Activated CD8-positive, alpha-beta T cell treated with anti-CD3 and anti-CD28 coated beads for 36 hours (primary cell): ENCODE measurements at regions of chr1 and their contacts with region 1.

Region 1: DNA sequence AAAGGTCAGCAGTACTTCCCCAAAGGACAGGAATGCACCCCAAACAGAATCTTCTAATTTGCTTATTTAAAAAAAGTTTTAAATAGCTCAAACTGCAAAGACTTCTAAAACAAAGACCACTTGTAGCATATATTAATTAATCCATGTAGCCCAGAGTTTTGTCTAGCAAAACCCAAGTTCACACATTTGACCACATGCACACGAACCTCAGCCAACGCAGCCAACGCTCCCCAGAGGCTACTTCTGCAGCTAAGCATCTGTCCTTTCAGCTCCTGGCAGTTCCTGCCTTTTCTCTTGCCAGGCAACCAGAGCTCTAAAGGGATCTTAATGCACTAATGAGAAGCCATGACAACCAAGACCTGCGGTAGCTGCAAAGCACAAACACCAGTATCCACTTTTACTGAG is 89.6 kb downstream of the RERE start:
- DNase-seq: no peak
- ATAC-seq: no peak
- H3K4me3 Mint-ChIP-seq: no peak overlapping the region
- H3K27ac Mint-ChIP-seq: no peak overlapping the region
- H3K4me1 Mint-ChIP-seq: peaks cover 15% of the 10 kb centered on the region
- H3K27me3 Mint-ChIP-seq: no peaks in the 10 kb centered on the region
- CTCF ChIP-seq: no peak

Region 2: GRCh38 chr1:8560611-8561544 is 166.9 kb before region 1 on chr1:
- CTCF ChIA-PET with region 1: interaction called, 147 read pairs
- POLR2A ChIA-PET with region 1: no interaction called
- intact Hi-C with region 1: loop called (anchors 2 kb)
- DNase-seq: peak; percentile 25
- ATAC-seq: peak; percentile 83
- H3K4me3 Mint-ChIP-seq: no peak overlapping the region
- H3K27ac Mint-ChIP-seq: peak overlapping the region; percentile 3
- H3K4me1 Mint-ChIP-seq: peaks cover 24% of the 10 kb centered on the region
- H3K27me3 Mint-ChIP-seq: no peaks in the 10 kb centered on the region
- CTCF ChIP-seq: peak; percentile 96

Region 3: GRCh38 chr1:8580566-8580965 is 147.2 kb before region 1 on chr1:
- CTCF ChIA-PET with region 1: interaction called, 17 read pairs
- POLR2A ChIA-PET with region 1: no interaction called
- intact Hi-C with region 1: no loop called
- DNase-seq: no peak
- ATAC-seq: no peak
- H3K4me3 Mint-ChIP-seq: no peak overlapping the region
- H3K27ac Mint-ChIP-seq: no peak overlapping the region
- H3K4me1 Mint-ChIP-seq: peaks cover 6% of the 10 kb centered on the region
- H3K27me3 Mint-ChIP-seq: no peaks in the 10 kb centered on the region
- CTCF ChIP-seq: no peak

Region 4: GRCh38 chr1:8660411-8660828 is 67.4 kb before region 1 on chr1:
- CTCF ChIA-PET with region 1: interaction called, 11 read pairs
- POLR2A ChIA-PET with region 1: no interaction called
- intact Hi-C with region 1: no loop called
- DNase-seq: no peak
- ATAC-seq: no peak
- H3K4me3 Mint-ChIP-seq: no peak overlapping the region
- H3K27ac Mint-ChIP-seq: no peak overlapping the region
- H3K4me1 Mint-ChIP-seq: peaks cover 3% of the 10 kb centered on the region
- H3K27me3 Mint-ChIP-seq: no peaks in the 10 kb centered on the region
- CTCF ChIP-seq: no peak

Region 5: DNA sequence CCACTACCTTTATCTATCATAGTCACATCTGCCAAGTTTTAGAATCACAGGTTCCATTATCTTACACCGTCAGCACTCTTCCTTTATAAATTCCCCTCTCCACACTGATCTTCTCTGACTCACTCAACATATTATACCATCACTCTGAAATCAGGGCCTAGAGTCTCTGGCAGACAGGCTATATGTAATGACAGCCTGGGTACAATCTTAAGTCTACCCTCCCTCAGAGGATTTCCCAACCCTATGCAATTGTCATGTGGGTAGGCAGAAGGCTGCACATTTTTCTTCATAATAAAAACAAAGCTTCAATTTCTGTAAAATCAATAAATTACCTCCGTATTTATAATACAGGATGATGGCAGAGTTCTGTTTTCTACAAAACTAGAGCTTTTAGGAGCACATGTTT is 48.4 kb before region 1 on chr1:
- CTCF ChIA-PET with region 1: interaction called, 15 read pairs
- POLR2A ChIA-PET with region 1: no interaction called
- intact Hi-C with region 1: no loop called
- DNase-seq: no peak
- ATAC-seq: peak; percentile 91
- H3K4me3 Mint-ChIP-seq: no peak overlapping the region
- H3K27ac Mint-ChIP-seq: no peak overlapping the region
- H3K4me1 Mint-ChIP-seq: peaks cover 40% of the 10 kb centered on the region
- H3K27me3 Mint-ChIP-seq: no peaks in the 10 kb centered on the region
- CTCF ChIP-seq: no peak

Region 6: GRCh38 chr1:8740034-8740449 is 12.2 kb after region 1 on chr1:
- CTCF ChIA-PET with region 1: interaction called, 15 read pairs
- POLR2A ChIA-PET with region 1: no interaction called
- intact Hi-C with region 1: no loop called
- DNase-seq: no peak
- ATAC-seq: no peak
- H3K4me3 Mint-ChIP-seq: no peak overlapping the region
- H3K27ac Mint-ChIP-seq: no peak overlapping the region
- H3K4me1 Mint-ChIP-seq: peaks cover 7% of the 10 kb centered on the region
- H3K27me3 Mint-ChIP-seq: no peaks in the 10 kb centered on the region
- CTCF ChIP-seq: no peak

Region 7: GRCh38 chr1:8794569-8794968 is 66.8 kb after region 1 on chr1:
- CTCF ChIA-PET with region 1: no interaction called
- POLR2A ChIA-PET with region 1: no interaction called
- intact Hi-C with region 1: no loop called
- DNase-seq: peak; percentile 10
- ATAC-seq: no peak
- H3K4me3 Mint-ChIP-seq: no peak overlapping the region
- H3K27ac Mint-ChIP-seq: no peak overlapping the region
- H3K4me1 Mint-ChIP-seq: peaks cover 6% of the 10 kb centered on the region
- H3K27me3 Mint-ChIP-seq: no peaks in the 10 kb centered on the region
- CTCF ChIP-seq: no peak

Region 8: DNA sequence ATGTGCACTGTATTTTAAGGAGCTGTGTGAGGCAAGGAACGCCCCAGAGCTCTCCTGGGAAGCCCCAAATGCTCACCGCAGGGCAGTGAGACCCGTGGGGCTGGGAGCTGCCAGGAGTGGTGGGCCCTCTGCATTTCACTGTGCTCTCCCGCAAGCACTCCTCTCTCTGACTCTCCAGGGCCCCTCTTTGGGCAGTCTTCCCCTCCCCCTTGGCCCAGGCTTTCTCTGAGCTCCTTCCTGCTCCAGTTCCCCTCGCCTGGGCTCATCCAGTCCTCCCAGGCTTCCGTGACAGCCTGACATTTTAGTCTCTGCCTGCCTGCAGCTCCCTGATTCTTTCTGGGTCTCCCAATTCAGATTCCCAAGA is 215.7 kb after region 1 on chr1:
- CTCF ChIA-PET with region 1: no interaction called
- POLR2A ChIA-PET with region 1: no interaction called
- intact Hi-C with region 1: no loop called
- DNase-seq: no peak
- ATAC-seq: no peak
- H3K4me3 Mint-ChIP-seq: peak overlapping the region; percentile 56
- H3K27ac Mint-ChIP-seq: peak overlapping the region; percentile 98
- H3K4me1 Mint-ChIP-seq: peaks cover 93% of the 10 kb centered on the region
- H3K27me3 Mint-ChIP-seq: no peaks in the 10 kb centered on the region
- CTCF ChIP-seq: no peak